H1 (cell line): ENCODE measurements at regions of chr19 and their contacts with region 1.

Region 1: GRCh38 chr19:29287061-29287460 is 74.1 kb upstream of the UQCRFS1 start:
- DNase-seq: no peak
- H3K4me3 ChIP-seq: no peak overlapping the region
- H3K27ac ChIP-seq: no peak overlapping the region
- H3K4me1 ChIP-seq: peaks cover 0 to 2% (median 0%) of the 10 kb centered on the region in 4 experiments; a peak in 3 of 7 replicates
- H3K27me3 ChIP-seq: no peaks in the 10 kb centered on the region; a peak in 1 of 7 replicates
- CTCF ChIP-seq: no peak
- EP300 ChIP-seq: no peak
- POLR2A ChIP-seq: no peak
- RAD21 ChIP-seq: no peak

Region 2: DNA sequence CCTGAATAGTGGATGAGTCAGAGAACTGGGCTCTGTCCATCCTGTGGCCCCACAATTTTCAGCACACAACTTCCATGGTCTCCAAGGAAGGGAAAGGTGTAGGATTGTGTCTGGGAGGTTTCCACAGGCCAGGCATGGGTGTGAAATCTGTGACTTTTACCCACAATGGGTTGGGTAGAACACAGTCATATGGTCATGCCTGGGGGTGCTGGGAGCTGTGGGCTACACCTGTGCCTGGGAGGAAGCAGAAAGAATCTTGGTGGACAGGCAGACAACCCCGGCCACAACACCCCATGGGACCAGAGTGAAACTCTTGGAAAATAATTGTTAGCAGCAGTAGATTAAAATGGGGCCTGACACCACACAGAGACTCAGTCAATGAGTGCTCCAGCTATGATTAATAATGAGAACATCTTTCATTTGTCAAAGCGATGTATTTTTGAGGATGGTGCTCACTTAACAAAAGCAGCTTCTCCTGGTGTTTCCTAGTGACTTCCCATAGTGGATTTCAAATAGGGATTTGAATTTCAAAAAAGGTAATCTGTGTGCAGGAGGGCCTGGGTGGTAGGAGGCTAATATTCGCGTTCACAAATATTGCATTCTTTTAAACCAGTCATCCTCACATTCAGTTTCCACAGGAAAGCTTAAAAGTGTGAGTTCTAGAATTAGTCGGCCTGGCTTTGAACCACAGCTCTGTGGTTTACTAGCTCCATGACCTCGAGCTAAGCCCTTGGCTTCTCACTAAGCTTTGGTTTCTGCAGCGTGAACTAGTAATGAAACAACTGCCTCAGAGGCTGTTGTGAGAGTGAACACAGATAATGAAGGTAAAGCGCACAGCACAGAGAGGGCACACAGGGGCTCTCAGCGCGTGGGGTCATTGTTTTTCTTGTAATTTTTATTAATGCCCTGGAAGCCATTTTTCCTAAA is 15.2 kb after region 1 on chr19:
- CTCF ChIA-PET with region 1: interaction called, 10 read pairs
- POLR2A ChIA-PET with region 1: no interaction called
- DNase-seq: no peak
- H3K4me3 ChIP-seq: no peak overlapping the region
- H3K27ac ChIP-seq: no peak overlapping the region
- H3K4me1 ChIP-seq: no peaks in the 10 kb centered on the region
- H3K27me3 ChIP-seq: no peaks in the 10 kb centered on the region; a peak in 1 of 7 replicates
- CTCF ChIP-seq: no peak
- EP300 ChIP-seq: no peak
- POLR2A ChIP-seq: no peak
- RAD21 ChIP-seq: no peak